Right ventricle myocardium inferior (tissue), 1 donor: ENCODE measurements at regions of chr1 and their contacts with region 1.

Region 1: GRCh38 chr1:183139281-183139942 is 46.7 kb upstream of the LAMC2 start:
- DNase-seq: no peak
- ATAC-seq: no peak

Region 2: GRCh38 chr1:182877842-182878241 is 261.6 kb before region 1 on chr1:
- intact Hi-C with region 1: loop called (anchors 10 kb)
- DNase-seq: no peak
- ATAC-seq: no peak